Lower leg skin (tissue), 4 donors: ENCODE measurements at regions of chr9 and their contacts with region 1.

Region 1: GRCh38 chr9:385818-386398 is 171.2 kb downstream of the DOCK8 start:
- DNase-seq: peak in 1 of 2 donors; percentile 33
- H3K4me3 ChIP-seq: no peak overlapping the region
- CTCF ChIP-seq: peak in 1 of 3 donors; percentile 53
- POLR2A ChIP-seq: no peak

Region 2: DNA sequence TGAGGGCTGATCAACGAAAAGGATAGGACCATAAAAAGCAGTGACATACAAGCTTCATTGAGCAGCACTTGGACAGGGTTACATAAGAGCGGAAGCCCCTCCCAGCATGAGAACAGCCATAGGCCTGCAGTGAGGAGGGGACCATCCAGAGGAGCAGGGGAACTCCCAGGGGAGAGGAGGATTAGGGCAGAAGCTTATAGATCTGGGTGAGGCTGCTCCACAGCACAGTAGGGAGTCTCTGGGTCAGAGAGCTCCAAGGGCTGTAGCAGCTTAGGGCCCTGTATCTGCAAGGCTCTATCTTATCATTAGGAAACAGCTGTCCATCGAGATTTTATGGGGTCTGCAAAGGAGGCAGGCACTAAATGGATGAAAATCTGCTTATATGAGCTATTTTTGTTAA is 15.3 kb after region 1 on chr9:
- intact Hi-C with region 1: no loop called
- DNase-seq: no peak
- H3K4me3 ChIP-seq: no peak overlapping the region
- CTCF ChIP-seq: no peak
- POLR2A ChIP-seq: no peak

Region 3: GRCh38 chr9:447230-448025 is 61.5 kb after region 1 on chr9:
- intact Hi-C with region 1: no loop called
- DNase-seq: no peak
- H3K4me3 ChIP-seq: no peak overlapping the region
- CTCF ChIP-seq: no peak
- POLR2A ChIP-seq: no peak

Region 4: DNA sequence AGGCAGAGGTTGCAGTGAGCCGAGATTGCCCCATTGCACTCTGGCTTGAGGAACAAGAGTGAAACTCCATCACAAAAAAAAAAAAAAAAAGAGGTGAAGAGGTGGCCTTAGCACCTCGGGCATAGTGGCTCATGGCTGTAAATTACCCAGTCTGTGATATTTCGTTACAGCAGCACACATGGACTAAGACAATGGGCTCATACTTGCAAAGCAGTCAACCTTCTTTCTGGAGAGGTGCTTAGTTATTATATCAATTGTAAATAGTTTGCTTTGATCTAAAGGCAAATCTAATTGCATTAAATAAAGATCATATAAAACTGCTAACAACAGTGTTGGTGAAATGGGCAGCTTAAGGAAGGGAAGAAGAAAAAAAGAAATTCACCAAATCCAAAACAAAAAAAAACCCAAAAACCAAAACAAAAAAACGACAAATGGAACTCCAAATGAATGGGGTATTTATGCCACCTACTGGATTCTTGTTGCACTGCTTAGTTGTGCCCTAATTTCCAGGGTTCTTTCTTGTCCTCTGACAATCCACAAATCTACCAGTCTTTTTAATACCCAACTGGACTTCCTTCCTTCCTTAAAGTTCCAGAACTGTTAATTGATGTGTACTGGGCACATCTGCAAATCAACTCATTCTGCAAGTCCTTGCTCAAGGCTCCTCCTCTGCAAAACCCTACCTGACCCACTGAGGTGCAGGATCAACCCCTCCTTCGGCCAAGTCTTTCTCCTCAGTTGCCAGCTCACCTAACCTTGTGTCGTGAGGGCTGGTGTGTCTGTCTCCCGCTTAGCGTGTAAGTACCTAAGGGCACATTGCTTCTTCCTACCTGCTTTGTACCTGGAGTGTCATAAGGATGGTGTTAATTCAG is 420.6 kb after region 1 on chr9:
- intact Hi-C with region 1: loop called (anchors 10 kb)
- DNase-seq: no peak
- H3K4me3 ChIP-seq: no peak overlapping the region
- CTCF ChIP-seq: no peak
- POLR2A ChIP-seq: no peak